ENCODE measurements at regions of chrX and their contacts with region 1.

Region 1: GRCh38 chrX:119791438-119792231 is at the start of gene RPL39:
- DNase-seq: peak; percentile 70 to 92
- ATAC-seq: peak; percentile 87 to 97 (median 92)
- H3K4me3 ChIP-seq: peak within 1 kb of the TSS; percentile 69
- H3K4me3 Mint-ChIP-seq: peak within 1 kb of the TSS; percentile 92
- H3K27ac ChIP-seq: peak within 1 kb of the TSS; percentile 100
- H3K27ac Mint-ChIP-seq: peak within 1 kb of the TSS; percentile 96 to 97
- H3K4me1 ChIP-seq: peaks cover 31% of the 10 kb centered on the region
- H3K4me1 Mint-ChIP-seq: peaks cover 0 to 16% of the 10 kb centered on the region in 2 donors
- H3K27me3 ChIP-seq: no peaks in the 10 kb centered on the region
- H3K27me3 Mint-ChIP-seq: no peaks in the 10 kb centered on the region
- CTCF ChIP-seq: no peak
- total RNA-seq, gene RPL39: 1,040 to 1,487 (median 1,381) TPM

Region 2: GRCh38 chrX:119753571-119754257 is 37.9 kb before region 1 on chrX:
- intact Hi-C with region 1: loop called (anchors 5 kb)
- DNase-seq: peak in 1 of 2 donors; percentile 88
- ATAC-seq: peak; percentile 52 to 69 (median 58)
- H3K4me3 ChIP-seq: no peak overlapping the region
- H3K4me3 Mint-ChIP-seq: peak overlapping the region; percentile 50
- H3K27ac ChIP-seq: peak overlapping the region; percentile 95
- H3K27ac Mint-ChIP-seq: peak overlapping the region; percentile 95
- H3K4me1 ChIP-seq: peaks cover 50% of the 10 kb centered on the region
- H3K4me1 Mint-ChIP-seq: peaks cover 34 to 36% of the 10 kb centered on the region in 2 donors
- H3K27me3 ChIP-seq: no peaks in the 10 kb centered on the region
- H3K27me3 Mint-ChIP-seq: no peaks in the 10 kb centered on the region
- CTCF ChIP-seq: peak; percentile 47

Region 3: DNA sequence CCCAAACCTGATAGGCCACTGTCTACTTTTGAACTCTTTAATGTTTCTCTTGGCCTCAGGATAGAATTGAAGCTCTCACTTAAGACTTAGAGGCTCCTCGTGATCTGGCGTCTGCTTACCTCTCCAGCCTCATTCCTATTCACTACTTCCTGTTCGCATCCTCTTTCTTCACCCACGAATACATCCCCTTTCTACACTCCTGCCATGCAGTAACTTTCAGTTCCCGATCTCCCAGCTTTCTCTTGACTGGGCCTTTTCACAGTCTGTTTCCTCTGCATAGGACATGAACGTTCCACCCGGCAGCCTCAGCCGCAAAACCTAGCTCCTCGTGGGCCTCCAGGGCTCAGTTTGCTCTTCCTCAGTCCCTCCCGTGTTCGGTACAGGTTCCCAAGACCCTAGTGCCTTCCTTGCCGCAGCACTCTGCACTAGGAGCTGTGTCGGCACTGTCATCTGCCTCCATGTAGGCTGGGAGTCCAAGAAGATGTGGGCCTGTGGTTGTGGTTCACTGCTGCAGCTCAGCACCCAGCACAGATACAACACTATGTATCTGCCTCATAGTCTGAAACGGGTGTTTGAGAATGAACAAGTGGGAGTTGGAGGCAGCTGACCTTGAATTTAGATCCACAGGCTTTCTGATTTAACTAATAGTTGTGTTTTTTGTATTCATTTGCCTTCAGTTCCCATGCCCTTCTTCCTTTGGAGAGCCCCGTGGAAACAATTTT is 16.0 kb before region 1 on chrX:
- intact Hi-C with region 1: no loop called
- DNase-seq: no peak
- ATAC-seq: no peak
- H3K4me3 ChIP-seq: no peak overlapping the region
- H3K4me3 Mint-ChIP-seq: no peak overlapping the region
- H3K27ac ChIP-seq: no peak overlapping the region
- H3K27ac Mint-ChIP-seq: peak overlapping the region in 1 of 2 donors; percentile 71
- H3K4me1 ChIP-seq: no peaks in the 10 kb centered on the region
- H3K4me1 Mint-ChIP-seq: peaks cover 0 to 6% of the 10 kb centered on the region in 2 donors
- H3K27me3 ChIP-seq: no peaks in the 10 kb centered on the region
- H3K27me3 Mint-ChIP-seq: no peaks in the 10 kb centered on the region
- CTCF ChIP-seq: no peak

Region 4: GRCh38 chrX:119826399-119826959 is 34.8 kb after region 1 on chrX:
- intact Hi-C with region 1: loop called (anchors 1 kb)
- DNase-seq: no peak
- ATAC-seq: no peak
- H3K4me3 ChIP-seq: no peak overlapping the region
- H3K4me3 Mint-ChIP-seq: no peak overlapping the region
- H3K27ac ChIP-seq: no peak overlapping the region
- H3K27ac Mint-ChIP-seq: no peak overlapping the region
- H3K4me1 ChIP-seq: peaks cover 2% of the 10 kb centered on the region
- H3K4me1 Mint-ChIP-seq: peaks cover 0 to 9% of the 10 kb centered on the region in 2 donors
- H3K27me3 ChIP-seq: no peaks in the 10 kb centered on the region
- H3K27me3 Mint-ChIP-seq: no peaks in the 10 kb centered on the region
- CTCF ChIP-seq: no peak

Region 5: GRCh38 chrX:119852382-119853353 is 61.0 kb after region 1 on chrX and contains the start of gene UPF3B:
- intact Hi-C with region 1: loop called (anchors 5 kb)
- DNase-seq: peak; percentile 85 to 97
- ATAC-seq: peak; percentile 94 to 100 (median 95)
- H3K4me3 ChIP-seq: peak within 1 kb of the TSS; percentile 100
- H3K4me3 Mint-ChIP-seq: peak within 1 kb of the TSS; percentile 100
- H3K27ac ChIP-seq: peak within 1 kb of the TSS; percentile 98
- H3K27ac Mint-ChIP-seq: peak within 1 kb of the TSS; percentile 99
- H3K4me1 ChIP-seq: peaks cover 12% of the 10 kb centered on the region
- H3K4me1 Mint-ChIP-seq: peaks cover 14 to 15% of the 10 kb centered on the region in 2 donors
- H3K27me3 ChIP-seq: no peaks in the 10 kb centered on the region
- H3K27me3 Mint-ChIP-seq: peaks cover 0 to 8% of the 10 kb centered on the region in 2 donors
- CTCF ChIP-seq: no peak
- total RNA-seq, gene UPF3B: 9.3 to 16.4 (median 12.4) TPM

Region 6: GRCh38 chrX:119871599-119872395 is 80.2 kb after region 1 on chrX and contains the starts of genes NDUFA1 and RNF113A:
- intact Hi-C with region 1: loop called (anchors 1 kb)
- DNase-seq: peak; percentile 78 to 93
- ATAC-seq: peak; percentile 86 to 96 (median 91)
- H3K4me3 ChIP-seq: peak within 1 kb of the TSS; percentile 65
- H3K4me3 Mint-ChIP-seq: peak within 1 kb of the TSS; percentile 97
- H3K27ac ChIP-seq: peak within 1 kb of the TSS; percentile 97
- H3K27ac Mint-ChIP-seq: peak within 1 kb of the TSS; percentile 97 to 99
- H3K4me1 ChIP-seq: peaks cover 13% of the 10 kb centered on the region
- H3K4me1 Mint-ChIP-seq: peaks cover 19 to 25% of the 10 kb centered on the region in 2 donors
- H3K27me3 ChIP-seq: no peaks in the 10 kb centered on the region
- H3K27me3 Mint-ChIP-seq: no peaks in the 10 kb centered on the region
- CTCF ChIP-seq: no peak
- total RNA-seq, gene NDUFA1: 43.6 to 56.8 (median 54.9) TPM
- total RNA-seq, gene RNF113A: 29.6 to 45.9 (median 34.7) TPM

Region 7: DNA sequence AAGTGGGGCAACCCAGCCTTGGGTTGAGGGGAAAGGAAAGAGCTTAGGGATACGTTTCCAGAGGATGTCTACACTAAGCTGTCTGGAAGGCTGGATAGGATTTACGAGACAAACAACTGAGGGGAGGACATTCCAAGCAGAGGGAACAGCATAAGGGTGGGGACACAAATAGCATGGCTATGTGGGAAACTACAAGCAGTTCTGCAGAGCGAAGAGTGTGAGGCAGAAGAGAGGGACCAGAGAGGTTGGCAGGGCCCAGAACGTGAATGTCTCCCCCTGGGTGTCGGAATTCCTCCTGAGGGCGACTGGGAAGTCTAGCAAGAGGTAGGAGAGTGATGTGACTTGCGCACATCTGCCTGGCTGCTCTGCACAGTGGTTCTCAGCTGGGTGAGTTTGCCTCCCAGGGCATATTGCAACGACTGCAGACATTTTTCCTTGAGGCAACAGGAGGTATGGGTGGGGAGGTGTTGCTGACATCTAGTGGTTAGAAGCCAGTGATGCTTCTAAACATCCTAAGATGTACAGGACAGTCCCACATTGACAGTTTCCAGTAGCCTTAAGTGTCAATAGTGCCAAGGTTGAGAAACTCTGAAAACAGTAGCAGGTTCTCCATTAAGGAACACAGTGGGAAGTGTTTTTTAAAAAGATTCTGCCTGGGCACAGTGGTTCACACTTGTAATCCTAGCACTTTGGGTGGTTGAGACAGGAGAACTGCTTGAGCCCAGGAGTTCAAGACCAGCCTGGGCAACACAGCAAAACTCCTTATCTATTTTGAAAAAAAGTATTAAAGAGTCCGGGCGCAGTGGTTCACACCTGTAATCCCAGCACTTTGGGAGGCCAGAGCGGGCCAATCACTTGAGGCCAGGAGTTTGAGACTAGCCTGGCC is 89.2 kb after region 1 on chrX:
- intact Hi-C with region 1: loop called (anchors 2 kb)
- DNase-seq: peak in 1 of 2 donors; percentile 72
- ATAC-seq: peak; percentile 81 to 97 (median 87)
- H3K4me3 ChIP-seq: no peak overlapping the region
- H3K4me3 Mint-ChIP-seq: no peak overlapping the region
- H3K27ac ChIP-seq: no peak overlapping the region
- H3K27ac Mint-ChIP-seq: peak overlapping the region; percentile 17 to 52
- H3K4me1 ChIP-seq: peaks cover 7% of the 10 kb centered on the region
- H3K4me1 Mint-ChIP-seq: peaks cover 0 to 5% of the 10 kb centered on the region in 2 donors
- H3K27me3 ChIP-seq: no peaks in the 10 kb centered on the region
- H3K27me3 Mint-ChIP-seq: no peaks in the 10 kb centered on the region
- CTCF ChIP-seq: peak; percentile 29

Region 8: DNA sequence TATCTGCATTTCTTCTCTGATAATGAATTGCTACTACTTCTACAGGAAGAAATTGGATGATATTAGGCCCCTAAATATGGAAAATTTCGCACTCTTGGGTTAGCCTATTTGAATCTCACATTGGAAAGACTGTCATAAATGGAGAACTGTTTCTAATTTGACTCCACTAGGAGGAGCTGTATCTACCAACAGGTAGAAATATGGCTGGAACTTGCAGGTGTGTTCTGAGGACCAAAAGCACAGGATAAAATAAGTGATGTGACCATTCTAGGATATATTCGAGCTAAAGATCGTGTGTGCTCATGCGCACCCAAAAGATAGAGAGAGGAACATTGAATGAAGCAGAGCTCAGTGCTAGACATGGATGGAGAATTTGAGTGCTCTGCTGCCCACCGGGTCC is 156.7 kb after region 1 on chrX:
- intact Hi-C with region 1: no loop called
- DNase-seq: peak in 1 of 2 donors; percentile 3
- ATAC-seq: no peak
- H3K4me3 ChIP-seq: no peak overlapping the region
- H3K4me3 Mint-ChIP-seq: no peak overlapping the region
- H3K27ac ChIP-seq: no peak overlapping the region
- H3K27ac Mint-ChIP-seq: no peak overlapping the region
- H3K4me1 ChIP-seq: peaks cover 5% of the 10 kb centered on the region
- H3K4me1 Mint-ChIP-seq: no peaks in the 10 kb centered on the region
- H3K27me3 ChIP-seq: no peaks in the 10 kb centered on the region
- H3K27me3 Mint-ChIP-seq: peaks cover 8 to 23% of the 10 kb centered on the region in 2 donors
- CTCF ChIP-seq: no peak